B cell (primary cell): ENCODE measurements at regions of chr1 and their contacts with region 1.

Region 1: GRCh38 chr1:13699936-13700520 is at the start of gene PRDM2:
- DNase-seq: peak; percentile 90
- ATAC-seq: peak; percentile 50
- H3K4me3 ChIP-seq: peak within 1 kb of the TSS; percentile 81 to 91 (median 84)
- H3K4me3 Mint-ChIP-seq: peak within 1 kb of the TSS; percentile 96
- H3K27ac ChIP-seq: peak within 1 kb of the TSS; percentile 95 to 98
- H3K27ac Mint-ChIP-seq: peak within 1 kb of the TSS; percentile 99
- H3K4me1 ChIP-seq: peaks cover 44 to 51% of the 10 kb centered on the region in 2 donors
- H3K4me1 Mint-ChIP-seq: peaks cover 52% of the 10 kb centered on the region
- H3K27me3 ChIP-seq: no peaks in the 10 kb centered on the region
- H3K27me3 Mint-ChIP-seq: no peaks in the 10 kb centered on the region
- CTCF ChIP-seq: no peak
- total RNA-seq, gene PRDM2: 432 and 447 TPM in 2 replicates

Region 2: GRCh38 chr1:13593511-13594131 is 106.4 kb before region 1 on chr1:
- CTCF ChIA-PET with region 1: no interaction called
- POLR2A ChIA-PET with region 1: no interaction called
- intact Hi-C with region 1: no loop called
- DNase-seq: no peak
- ATAC-seq: no peak
- H3K4me3 ChIP-seq: no peak overlapping the region
- H3K4me3 Mint-ChIP-seq: no peak overlapping the region
- H3K27ac ChIP-seq: no peak overlapping the region
- H3K27ac Mint-ChIP-seq: no peak overlapping the region
- H3K4me1 ChIP-seq: no peaks in the 10 kb centered on the region
- H3K4me1 Mint-ChIP-seq: no peaks in the 10 kb centered on the region
- H3K27me3 ChIP-seq: peaks cover 0 to 4% (median 0%) of the 10 kb centered on the region in 4 experiments
- H3K27me3 Mint-ChIP-seq: peaks cover 36% of the 10 kb centered on the region
- CTCF ChIP-seq: no peak

Region 3: GRCh38 chr1:13642306-13643004 is 57.6 kb before region 1 on chr1:
- CTCF ChIA-PET with region 1: no interaction called
- POLR2A ChIA-PET with region 1: no interaction called
- intact Hi-C with region 1: loop called (anchors 2 kb)
- DNase-seq: peak; percentile 80
- ATAC-seq: peak; percentile 90
- H3K4me3 ChIP-seq: peak overlapping the region in 1 of 5 experiments; percentile 1
- H3K4me3 Mint-ChIP-seq: peak overlapping the region; percentile 83
- H3K27ac ChIP-seq: peak overlapping the region; percentile 44 to 77
- H3K27ac Mint-ChIP-seq: peak overlapping the region; percentile 88
- H3K4me1 ChIP-seq: peaks cover 18 to 19% of the 10 kb centered on the region in 2 donors
- H3K4me1 Mint-ChIP-seq: peaks cover 36% of the 10 kb centered on the region
- H3K27me3 ChIP-seq: peaks cover 0 to 2% (median 0%) of the 10 kb centered on the region in 4 experiments
- H3K27me3 Mint-ChIP-seq: no peaks in the 10 kb centered on the region
- CTCF ChIP-seq: no peak

Region 4: GRCh38 chr1:13667691-13668090 is 32.3 kb before region 1 on chr1:
- CTCF ChIA-PET with region 1: interaction called, 41 read pairs
- POLR2A ChIA-PET with region 1: interaction called, 6 read pairs
- intact Hi-C with region 1: loop called (anchors 1 kb)
- DNase-seq: peak; percentile 86
- ATAC-seq: peak; percentile 66
- H3K4me3 ChIP-seq: peak overlapping the region in 1 of 5 experiments; percentile 43
- H3K4me3 Mint-ChIP-seq: peak overlapping the region; percentile 87
- H3K27ac ChIP-seq: peak overlapping the region; percentile 78 to 84
- H3K27ac Mint-ChIP-seq: peak overlapping the region; percentile 95
- H3K4me1 ChIP-seq: peaks cover 34 to 35% of the 10 kb centered on the region in 2 donors
- H3K4me1 Mint-ChIP-seq: peaks cover 52% of the 10 kb centered on the region
- H3K27me3 ChIP-seq: no peaks in the 10 kb centered on the region
- H3K27me3 Mint-ChIP-seq: no peaks in the 10 kb centered on the region
- CTCF ChIP-seq: no peak

Region 5: DNA sequence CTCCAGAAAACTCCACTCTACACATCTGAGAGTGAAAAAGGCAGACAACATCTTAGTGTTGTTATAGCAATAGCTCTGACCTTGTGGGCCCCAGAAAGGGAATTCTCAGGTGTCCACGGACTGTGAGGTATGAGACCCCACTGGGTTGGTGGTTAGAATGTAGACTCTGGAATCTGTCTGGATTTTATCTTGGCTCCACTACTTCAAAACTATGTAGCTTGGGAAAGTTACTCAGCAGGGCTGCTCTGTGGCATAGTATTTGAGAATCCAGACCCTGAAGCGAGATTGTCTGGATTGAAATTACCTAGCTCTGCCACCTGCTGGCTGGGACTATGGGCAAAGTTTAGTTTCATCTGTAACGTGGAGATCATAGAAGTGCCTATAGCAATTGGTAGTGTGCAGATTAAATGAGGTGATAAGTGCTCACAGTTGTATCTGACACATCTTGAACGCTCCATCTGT is 25.7 kb after region 1 on chr1:
- CTCF ChIA-PET with region 1: interaction called, 339 read pairs
- POLR2A ChIA-PET with region 1: interaction called, 84 read pairs
- intact Hi-C with region 1: loop called (anchors 1 kb)
- DNase-seq: peak; percentile 84
- ATAC-seq: peak; percentile 35
- H3K4me3 ChIP-seq: no peak overlapping the region
- H3K4me3 Mint-ChIP-seq: peak overlapping the region; percentile 75
- H3K27ac ChIP-seq: peak overlapping the region; percentile 62 to 98
- H3K27ac Mint-ChIP-seq: peak overlapping the region; percentile 88
- H3K4me1 ChIP-seq: peaks cover 68 to 74% of the 10 kb centered on the region in 2 donors
- H3K4me1 Mint-ChIP-seq: peaks cover 90% of the 10 kb centered on the region
- H3K27me3 ChIP-seq: no peaks in the 10 kb centered on the region
- H3K27me3 Mint-ChIP-seq: no peaks in the 10 kb centered on the region
- CTCF ChIP-seq: peak; percentile 85

Region 6: GRCh38 chr1:13748610-13749505 is 48.8 kb after region 1 on chr1:
- CTCF ChIA-PET with region 1: interaction called, 11 read pairs
- POLR2A ChIA-PET with region 1: interaction called, 7 read pairs
- intact Hi-C with region 1: loop called (anchors 1 kb)
- DNase-seq: peak; percentile 97
- ATAC-seq: peak; percentile 90
- H3K4me3 ChIP-seq: peak overlapping the region; percentile 59 to 81 (median 72)
- H3K4me3 Mint-ChIP-seq: peak overlapping the region; percentile 95
- H3K27ac ChIP-seq: peak overlapping the region; percentile 86 to 90
- H3K27ac Mint-ChIP-seq: peak overlapping the region; percentile 98
- H3K4me1 ChIP-seq: peaks cover 38 to 42% of the 10 kb centered on the region in 2 donors
- H3K4me1 Mint-ChIP-seq: peaks cover 59% of the 10 kb centered on the region
- H3K27me3 ChIP-seq: no peaks in the 10 kb centered on the region
- H3K27me3 Mint-ChIP-seq: no peaks in the 10 kb centered on the region
- CTCF ChIP-seq: peak; percentile 23

Region 7: DNA sequence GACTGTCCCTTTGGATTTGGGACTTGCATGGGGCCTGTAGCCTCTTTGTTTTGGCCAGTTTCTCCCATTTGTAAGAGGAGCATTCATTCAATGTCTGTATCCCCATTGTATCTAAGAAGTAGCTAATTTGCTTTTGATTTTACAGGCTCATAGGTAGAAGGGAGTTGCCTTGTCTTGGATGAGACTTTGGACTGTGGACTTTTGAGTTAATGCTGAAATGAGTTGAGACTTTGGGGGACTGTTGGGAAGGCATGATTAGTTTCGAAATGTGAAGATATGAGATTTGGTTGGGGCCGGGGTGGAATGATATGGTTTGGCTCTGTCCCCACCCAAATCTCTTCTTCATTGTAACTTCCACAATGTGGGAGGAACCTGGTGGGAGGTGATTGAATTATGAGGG is 151.7 kb after region 1 on chr1:
- CTCF ChIA-PET with region 1: no interaction called
- POLR2A ChIA-PET with region 1: no interaction called
- intact Hi-C with region 1: no loop called
- DNase-seq: no peak
- ATAC-seq: no peak
- H3K4me3 ChIP-seq: no peak overlapping the region
- H3K4me3 Mint-ChIP-seq: no peak overlapping the region
- H3K27ac ChIP-seq: no peak overlapping the region
- H3K27ac Mint-ChIP-seq: no peak overlapping the region
- H3K4me1 ChIP-seq: no peaks in the 10 kb centered on the region
- H3K4me1 Mint-ChIP-seq: no peaks in the 10 kb centered on the region
- H3K27me3 ChIP-seq: peaks cover 0 to 2% (median 0%) of the 10 kb centered on the region in 4 experiments
- H3K27me3 Mint-ChIP-seq: peaks cover 28% of the 10 kb centered on the region
- CTCF ChIP-seq: no peak